WTC11 (cell line): ENCODE measurements at regions of chr4 and their contacts with region 1.

Region 1: GRCh38 chr4:2441393-2442174 is 22.8 kb downstream of the CFAP99 start:
- DNase-seq: peak; percentile 95
- ATAC-seq: peak; percentile 94
- H3K4me3 Mint-ChIP-seq: no peak overlapping the region
- H3K27ac Mint-ChIP-seq: no peak overlapping the region
- H3K4me1 Mint-ChIP-seq: peaks cover 2% of the 10 kb centered on the region; the same call in 1 of the 2 replicates
- H3K27me3 Mint-ChIP-seq: no peaks in the 10 kb centered on the region; the same call in 1 of the 2 replicates
- CTCF ChIP-seq: peak; percentile 73

Region 2: GRCh38 chr4:2402029-2402428 is 39.6 kb before region 1 on chr4:
- CTCF ChIA-PET with region 1: interaction called, 16 read pairs
- POLR2A ChIA-PET with region 1: interaction called, 3 read pairs
- DNase-seq: peak; percentile 88
- ATAC-seq: peak; percentile 92
- H3K4me3 Mint-ChIP-seq: peak overlapping the region; percentile 67
- H3K27ac Mint-ChIP-seq: 0 out of 2 replicates have a peak overlapping the region, but pooled peaks have one; percentile 23
- H3K4me1 Mint-ChIP-seq: peaks cover 30% of the 10 kb centered on the region
- H3K27me3 Mint-ChIP-seq: peaks cover 9% of the 10 kb centered on the region
- CTCF ChIP-seq: no peak

Region 3: GRCh38 chr4:2418650-2419571 is 22.7 kb before region 1 on chr4 and contains the start of gene CFAP99:
- CTCF ChIA-PET with region 1: interaction called, 27 read pairs
- POLR2A ChIA-PET with region 1: no interaction called
- DNase-seq: peak; percentile 99
- ATAC-seq: peak; percentile 71
- H3K4me3 Mint-ChIP-seq: peak within 1 kb of the TSS; percentile 86
- H3K27ac Mint-ChIP-seq: no peak within 1 kb of the TSS
- H3K4me1 Mint-ChIP-seq: peaks cover 44% of the 10 kb centered on the region
- H3K27me3 Mint-ChIP-seq: peaks cover 78% of the 10 kb centered on the region
- CTCF ChIP-seq: no peak
- total RNA-seq, gene CFAP99: 0.23 to 0.41 TPM in 2 of 3 replicates, not detected in the other

Region 4: DNA sequence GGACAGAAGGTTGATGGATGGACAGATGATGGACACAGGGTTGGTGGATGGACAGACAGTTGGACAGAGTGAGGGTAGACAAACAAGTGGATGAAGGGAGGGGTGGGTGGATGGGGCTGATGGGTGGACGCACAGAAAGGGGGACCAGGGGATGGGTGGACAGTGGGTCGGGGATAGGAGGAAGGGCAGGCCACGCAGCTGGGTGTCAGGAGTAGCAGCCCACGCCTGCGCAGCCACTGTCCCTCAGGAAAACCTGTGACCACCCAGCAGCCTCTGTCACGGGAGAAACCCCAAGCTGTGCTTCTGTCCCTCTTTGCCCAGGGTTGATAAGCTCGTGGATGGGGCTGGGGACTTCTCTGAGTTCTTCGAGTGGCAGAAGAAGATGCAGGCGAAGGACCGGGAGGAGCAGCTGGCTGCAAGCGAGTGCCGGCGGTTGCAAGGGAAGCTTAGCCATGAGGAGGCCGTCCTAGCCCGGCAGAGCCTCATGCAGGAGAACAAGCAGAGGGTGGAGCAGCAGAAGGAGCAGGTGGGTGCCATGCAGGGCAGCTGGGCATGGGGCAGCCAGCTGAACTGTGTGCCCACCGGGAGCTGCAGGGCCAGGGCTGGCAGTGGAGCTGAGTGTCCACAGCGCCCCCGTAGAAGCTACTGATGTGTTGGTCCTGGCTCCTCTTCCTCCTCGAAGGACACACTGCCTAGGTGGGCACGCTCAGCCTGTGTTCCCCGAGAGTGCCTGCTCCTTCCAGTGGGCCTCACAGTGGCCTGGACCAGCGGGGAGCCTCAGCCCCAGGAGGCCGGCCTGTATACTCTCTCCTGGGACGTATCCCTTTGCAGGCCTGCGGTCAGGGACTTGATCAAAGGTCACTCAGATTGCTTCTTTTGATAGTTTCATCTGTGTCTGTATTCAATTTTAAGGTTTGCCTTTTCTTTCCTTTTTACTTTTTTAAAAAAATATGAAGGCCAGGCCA is 10.5 kb after region 1 on chr4:
- CTCF ChIA-PET with region 1: interaction called, 26 read pairs
- POLR2A ChIA-PET with region 1: no interaction called
- DNase-seq: no peak
- ATAC-seq: no peak
- H3K4me3 Mint-ChIP-seq: no peak overlapping the region
- H3K27ac Mint-ChIP-seq: no peak overlapping the region
- H3K4me1 Mint-ChIP-seq: no peaks in the 10 kb centered on the region
- H3K27me3 Mint-ChIP-seq: no peaks in the 10 kb centered on the region
- CTCF ChIP-seq: no peak

Region 5: DNA sequence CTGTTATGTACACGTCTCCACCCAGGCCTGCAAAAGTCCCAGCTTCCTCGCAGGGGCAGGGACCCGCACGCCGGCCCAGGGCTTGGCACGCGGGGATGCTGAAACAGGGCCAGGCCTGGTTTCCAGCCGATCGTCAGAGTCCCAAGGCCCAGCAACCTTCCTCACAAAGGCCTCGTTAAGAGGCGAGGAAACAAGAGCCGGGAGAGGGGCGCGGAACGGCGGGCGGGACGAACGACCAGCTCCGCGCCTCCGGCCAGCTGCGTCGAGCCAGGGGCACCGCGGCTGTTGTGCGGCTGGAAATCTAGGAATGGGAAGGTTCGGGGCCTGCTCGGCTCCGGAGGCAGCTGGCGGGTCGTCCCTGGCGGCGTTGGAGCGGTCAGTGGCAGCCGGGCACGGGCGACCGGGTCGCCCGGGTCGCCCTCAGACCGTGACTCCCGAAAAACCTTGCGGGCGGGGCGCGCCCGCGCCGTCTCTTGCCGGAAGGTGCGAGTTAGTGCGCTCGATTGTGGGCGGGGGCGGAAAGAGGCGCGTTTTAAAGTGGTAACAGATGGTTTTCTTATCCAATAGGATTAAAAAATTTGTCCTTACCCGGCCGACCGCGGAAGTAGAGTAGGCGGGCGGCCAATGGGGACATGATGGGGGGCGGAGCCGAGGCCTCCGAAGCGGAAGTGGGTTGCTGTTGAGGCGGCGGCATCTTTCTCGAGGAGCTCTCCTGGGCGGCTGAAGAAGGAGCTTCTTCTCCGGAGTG is 27.0 kb after region 1 on chr4 and contains the start of gene RNF4:
- CTCF ChIA-PET with region 1: interaction called, 28 read pairs
- POLR2A ChIA-PET with region 1: no interaction called
- DNase-seq: peak; percentile 94
- ATAC-seq: peak; percentile 90
- H3K4me3 Mint-ChIP-seq: peak within 1 kb of the TSS; percentile 99
- H3K27ac Mint-ChIP-seq: peak within 1 kb of the TSS; percentile 98
- H3K4me1 Mint-ChIP-seq: peaks cover 32% of the 10 kb centered on the region
- H3K27me3 Mint-ChIP-seq: peaks cover 3% of the 10 kb centered on the region
- CTCF ChIP-seq: no peak
- total RNA-seq, gene RNF4: 77.8 to 87.3 TPM (median 82.5 TPM) in 3 replicates